ENCODE measurements at regions of chr6 and their contacts with region 1.

Region 1: GRCh38 chr6:15245361-15246216 is at the start of gene JARID2:
- DNase-seq: peak; percentile 92
- total RNA-seq, gene JARID2: 4.5 TPM

Region 2: DNA sequence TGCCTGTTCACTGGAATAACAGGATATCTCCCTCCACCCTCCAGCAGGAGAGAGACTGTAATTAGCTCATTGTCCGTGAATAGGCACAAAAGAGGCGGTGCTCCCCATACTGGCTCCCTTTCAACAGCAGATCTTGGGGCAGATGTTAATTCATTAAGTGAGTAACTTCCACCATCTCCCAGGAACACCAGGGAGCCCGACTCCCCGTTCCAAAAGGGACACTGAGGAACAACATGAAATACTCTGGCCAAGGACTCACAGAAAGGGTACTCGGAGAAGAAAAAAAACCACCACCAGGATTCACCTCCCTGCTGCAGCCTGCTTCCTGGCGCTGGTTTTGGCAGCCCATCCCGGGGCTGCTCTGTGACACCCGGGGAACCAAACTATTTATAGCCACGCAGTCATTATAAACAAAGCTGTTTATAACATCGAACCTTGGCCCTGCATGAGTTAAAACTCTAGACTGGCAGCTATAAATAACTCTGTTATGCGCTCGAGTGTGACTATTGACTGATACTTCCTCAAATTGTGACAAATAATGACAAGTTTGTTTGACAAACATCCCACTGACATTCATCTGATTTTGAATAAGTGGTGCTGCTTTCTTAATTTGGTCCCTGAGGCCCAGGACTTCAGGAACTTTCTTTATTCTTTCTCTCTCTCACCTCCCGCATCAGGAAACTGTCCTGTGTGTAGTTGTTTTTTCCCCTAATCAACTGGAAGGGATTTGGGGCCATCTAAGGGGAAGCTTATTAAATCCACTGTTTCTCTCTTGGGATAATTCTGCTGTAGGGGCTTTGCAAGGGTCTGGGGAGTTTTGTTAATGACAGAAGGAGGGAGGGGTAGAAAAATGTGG is 606.5 kb before region 1 on chr6:
- intact Hi-C with region 1: loop called (anchors 10 kb)
- DNase-seq: peak; percentile 81

Region 3: DNA sequence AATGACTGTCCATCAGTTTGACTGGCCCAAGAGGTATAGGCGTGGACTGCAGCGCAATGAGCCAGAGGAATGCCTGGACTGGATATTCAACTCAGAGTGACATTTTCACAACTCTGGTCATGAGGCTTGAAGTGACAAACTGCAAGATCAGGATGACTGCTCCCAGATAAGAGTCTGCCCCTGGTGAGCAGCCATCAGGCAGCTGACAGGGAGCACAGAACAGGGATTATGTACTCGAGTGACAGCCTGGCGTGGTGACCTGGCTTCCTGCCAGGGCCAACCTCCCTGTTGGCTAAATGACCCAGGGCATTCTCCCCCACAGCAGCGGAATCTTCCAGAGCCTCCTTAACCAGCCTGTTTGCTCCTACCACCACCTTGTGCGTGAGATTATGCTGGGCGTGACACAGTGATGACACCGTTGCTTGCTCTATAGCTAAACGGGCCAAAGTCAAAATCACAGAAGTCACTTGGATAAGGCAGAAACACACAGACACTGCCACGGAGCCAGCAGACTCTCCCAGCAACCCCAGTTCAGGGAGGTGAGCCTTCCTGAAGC is 208.8 kb before region 1 on chr6:
- intact Hi-C with region 1: loop called (anchors 5 kb)
- DNase-seq: peak; percentile 90

Region 4: DNA sequence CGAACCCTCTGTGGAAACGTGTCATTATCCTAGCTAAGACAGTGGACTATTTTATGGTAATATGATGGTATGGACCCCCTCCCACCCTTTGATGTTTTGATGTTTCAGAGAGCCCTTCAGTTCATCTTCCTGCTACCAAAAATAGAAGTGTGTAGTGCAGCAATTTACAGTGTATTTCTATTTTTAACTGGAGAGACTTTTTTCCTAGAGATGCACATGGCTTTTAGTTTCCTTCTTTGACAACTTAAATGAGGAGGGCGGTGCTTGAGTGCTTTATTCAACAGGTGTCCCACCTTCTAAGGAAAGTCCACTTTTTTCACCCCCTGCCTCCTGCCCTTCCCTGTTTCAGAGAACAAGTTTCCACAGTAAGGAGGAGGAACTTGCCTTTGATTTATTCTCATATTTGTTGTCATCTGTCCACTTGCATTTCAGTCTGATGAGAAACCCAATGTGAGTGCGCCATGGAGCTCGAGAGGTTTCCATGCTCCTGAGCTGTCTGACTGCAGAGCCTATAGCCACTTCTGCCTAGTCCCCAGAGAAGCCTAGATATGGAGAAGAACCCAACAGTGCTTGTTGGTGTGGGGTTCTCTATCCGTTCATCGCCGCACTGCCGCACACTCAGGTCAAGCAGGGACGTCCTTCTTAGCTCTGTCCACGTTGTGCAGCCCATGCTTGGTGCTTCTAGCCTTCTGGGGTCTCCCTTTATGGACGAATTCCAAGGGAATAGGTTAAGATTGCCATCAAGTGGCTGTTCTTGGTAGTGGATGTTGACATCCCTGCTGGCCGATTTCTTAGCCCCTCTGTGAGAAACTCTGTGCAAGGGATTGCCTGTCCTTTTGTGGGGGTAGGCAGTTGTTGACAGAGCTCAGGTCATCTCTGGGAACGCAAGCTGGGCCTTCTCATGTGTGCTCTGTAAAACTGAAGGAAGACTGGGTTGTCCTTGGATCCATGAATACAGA is 144.5 kb after region 1 on chr6:
- intact Hi-C with region 1: loop called (anchors 5 kb)
- DNase-seq: no peak

Region 5: GRCh38 chr6:15491255-15491985 is 245.8 kb after region 1 on chr6:
- intact Hi-C with region 1: loop called (anchors 5 kb)
- DNase-seq: peak; percentile 86

Measured in cardiac septum (tissue), 1 donor.